ENCODE measurements at regions of chr16 and their contacts with region 1.

Region 1: GRCh38 chr16:60949800-60950199 is 1086.4 kb downstream of the CDH8 start:
- DNase-seq: no peak
- ATAC-seq: no peak
- H3K4me3 ChIP-seq: no peak overlapping the region
- H3K27ac ChIP-seq: no peak overlapping the region
- H3K4me1 ChIP-seq: no peaks in the 10 kb centered on the region
- H3K27me3 ChIP-seq: no peaks in the 10 kb centered on the region
- CTCF ChIP-seq: no peak
- POLR2A ChIP-seq: no peak

Region 2: DNA sequence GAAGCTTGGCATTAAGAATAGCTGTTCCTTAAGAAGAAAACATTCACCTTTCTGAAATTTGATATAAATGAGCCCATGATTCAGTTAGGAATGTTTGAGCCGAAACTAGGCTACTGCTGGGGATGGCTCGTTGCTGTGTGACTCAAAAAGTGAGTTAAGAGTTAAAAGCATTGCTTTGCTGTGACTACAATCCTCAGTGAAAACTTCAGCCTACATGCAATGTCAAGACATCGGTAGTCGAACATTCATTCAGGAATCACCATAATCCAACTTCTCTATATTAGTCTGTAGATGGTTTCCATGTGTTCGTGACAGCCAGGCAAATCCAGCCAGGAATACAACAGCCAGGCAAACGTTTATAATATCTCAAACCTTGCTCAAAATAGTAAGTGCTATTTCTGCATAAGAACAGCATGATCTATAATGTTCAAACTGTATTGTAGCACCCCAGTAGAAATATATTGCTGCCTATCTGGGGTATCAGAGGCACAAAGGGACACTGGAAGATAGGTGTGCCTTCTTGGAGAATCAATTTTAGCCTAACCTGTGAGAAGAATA is 138.7 kb before region 1 on chr16:
- in situ Hi-C with region 1: no loop called
- intact Hi-C with region 1: no loop called
- DNase-seq: no peak
- ATAC-seq: no peak
- H3K4me3 ChIP-seq: no peak overlapping the region
- H3K27ac ChIP-seq: no peak overlapping the region
- H3K4me1 ChIP-seq: no peaks in the 10 kb centered on the region
- H3K27me3 ChIP-seq: no peaks in the 10 kb centered on the region
- CTCF ChIP-seq: no peak
- POLR2A ChIP-seq: no peak

Region 3: DNA sequence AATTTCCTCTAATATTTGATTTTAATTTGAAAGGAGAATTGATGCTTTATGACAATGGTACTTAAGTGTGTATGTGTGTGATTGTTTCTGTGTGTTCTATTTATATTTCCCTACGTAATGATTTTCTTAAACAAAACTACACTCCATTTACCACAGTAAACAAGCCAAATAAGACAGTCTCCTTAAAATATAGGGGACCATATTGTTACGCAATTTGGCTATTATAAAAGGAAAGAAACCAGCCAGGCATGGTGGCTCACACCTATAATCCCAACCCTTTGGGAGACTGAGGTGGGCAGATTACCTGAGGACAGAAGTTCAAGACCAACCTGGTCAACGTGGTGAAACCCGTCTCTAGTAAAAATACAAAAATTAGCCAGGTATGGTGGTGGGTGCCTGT is 47.7 kb before region 1 on chr16:
- in situ Hi-C with region 1: loop called in 1 of 4 experiments (anchors 10 kb)
- intact Hi-C with region 1: no loop called
- DNase-seq: no peak
- ATAC-seq: no peak
- H3K4me3 ChIP-seq: no peak overlapping the region
- H3K27ac ChIP-seq: no peak overlapping the region
- H3K4me1 ChIP-seq: no peaks in the 10 kb centered on the region
- H3K27me3 ChIP-seq: no peaks in the 10 kb centered on the region
- CTCF ChIP-seq: no peak
- POLR2A ChIP-seq: no peak

Region 4: DNA sequence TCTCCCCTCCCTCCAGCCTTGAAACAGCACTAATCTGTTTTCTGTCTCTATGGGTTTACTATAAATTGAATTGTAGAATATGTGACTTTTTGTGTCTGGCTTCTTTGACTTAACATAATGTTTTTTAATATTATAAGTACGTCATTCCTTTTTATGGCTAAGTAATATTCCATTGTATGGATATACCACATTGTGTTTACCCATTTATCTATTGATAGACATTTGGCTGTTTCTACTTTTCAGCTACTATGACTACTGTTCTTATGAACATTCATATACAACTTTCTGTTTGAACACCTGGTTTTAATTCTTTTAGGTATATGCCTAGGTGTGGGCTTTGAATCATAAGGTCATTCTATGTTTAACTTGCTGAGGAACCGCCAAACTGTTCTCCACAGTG is 124.5 kb after region 1 on chr16:
- in situ Hi-C with region 1: no loop called
- intact Hi-C with region 1: no loop called
- DNase-seq: no peak
- ATAC-seq: no peak
- H3K4me3 ChIP-seq: no peak overlapping the region
- H3K27ac ChIP-seq: no peak overlapping the region
- H3K4me1 ChIP-seq: no peaks in the 10 kb centered on the region
- H3K27me3 ChIP-seq: no peaks in the 10 kb centered on the region
- CTCF ChIP-seq: no peak
- POLR2A ChIP-seq: no peak